ENCODE measurements at regions of chr19 and their contacts with region 1.

Region 1: DNA sequence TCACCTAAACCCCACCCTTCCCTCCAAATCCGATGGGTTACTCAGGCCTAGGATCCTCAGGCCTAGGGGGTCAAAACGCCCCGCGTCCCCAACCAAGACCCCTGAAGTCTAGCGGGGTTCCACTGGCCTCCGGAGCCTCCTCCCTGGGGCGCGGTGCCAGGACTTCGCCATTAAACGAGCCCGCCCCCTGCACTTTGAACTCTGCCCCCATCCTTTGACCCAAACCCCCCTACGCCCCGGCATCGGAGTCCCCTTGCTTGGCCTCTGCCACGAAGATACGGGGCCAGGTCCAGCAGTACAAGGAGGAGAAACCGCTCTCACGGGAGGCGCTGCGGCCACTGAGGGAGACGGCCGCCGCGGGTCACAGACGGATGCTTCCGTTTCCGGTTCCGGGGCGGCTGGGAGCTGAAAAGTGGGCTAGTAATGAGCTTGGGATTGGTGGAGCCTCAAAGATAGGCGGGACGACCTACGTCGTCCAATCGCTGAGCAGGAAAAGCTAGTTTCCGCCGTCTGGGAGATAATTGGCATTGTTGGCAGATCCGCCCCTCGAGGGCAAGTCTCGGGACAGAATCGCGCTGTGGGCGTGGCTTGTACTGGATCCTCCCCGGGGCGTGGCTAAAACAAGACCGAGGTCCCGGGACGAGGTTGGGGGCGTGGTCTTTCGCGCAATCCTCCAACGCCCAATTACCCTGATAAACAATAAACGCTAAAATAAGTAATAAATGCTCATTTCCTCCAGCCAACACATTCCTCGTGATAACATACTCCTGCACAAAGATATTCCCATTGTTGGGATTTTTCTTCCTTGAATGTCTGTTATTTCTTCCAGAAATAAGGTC is 5.7 kb upstream of the ZNF77 start:
- DNase-seq: peak; percentile 98 to 100 (median 100)
- ATAC-seq: peak; percentile 96
- H3K4me3 ChIP-seq: peak overlapping the region; percentile 93
- H3K4me3 Mint-ChIP-seq: peak overlapping the region; percentile 86 to 98 (median 96)
- H3K27ac ChIP-seq: peak overlapping the region; percentile 87
- H3K27ac Mint-ChIP-seq: peak overlapping the region; percentile 91 to 100 (median 97)
- H3K4me1 ChIP-seq: peaks cover 9 to 11% of the 10 kb centered on the region in 2 donors
- H3K4me1 Mint-ChIP-seq: peaks cover 15 to 34% (median 29%) of the 10 kb centered on the region in 7 donors
- H3K27me3 ChIP-seq: no peaks in the 10 kb centered on the region
- H3K27me3 Mint-ChIP-seq: no peaks in the 10 kb centered on the region

Region 2: GRCh38 chr19:2782936-2783780 is 167.3 kb before region 1 on chr19 and contains the start of gene SGTA:
- CTCF ChIA-PET with region 1: no interaction called
- POLR2A ChIA-PET with region 1: no interaction called
- intact Hi-C with region 1: loop called in 1 of 2 experiments (anchors 1 kb)
- DNase-seq: peak; percentile 82 to 97 (median 95)
- ATAC-seq: peak; percentile 73
- H3K4me3 ChIP-seq: peak within 1 kb of the TSS; percentile 90
- H3K4me3 Mint-ChIP-seq: peak within 1 kb of the TSS; percentile 83 to 98 (median 88)
- H3K27ac ChIP-seq: peak within 1 kb of the TSS; percentile 95
- H3K27ac Mint-ChIP-seq: peak within 1 kb of the TSS; percentile 78 to 97 (median 92)
- H3K4me1 ChIP-seq: peaks cover 33 to 35% of the 10 kb centered on the region in 2 donors
- H3K4me1 Mint-ChIP-seq: peaks cover 29 to 64% (median 51%) of the 10 kb centered on the region in 7 donors
- H3K27me3 ChIP-seq: no peaks in the 10 kb centered on the region
- H3K27me3 Mint-ChIP-seq: no peaks in the 10 kb centered on the region
- total RNA-seq, gene SGTA: 32.2 to 47.8 (median 37.9) TPM

Region 3: DNA sequence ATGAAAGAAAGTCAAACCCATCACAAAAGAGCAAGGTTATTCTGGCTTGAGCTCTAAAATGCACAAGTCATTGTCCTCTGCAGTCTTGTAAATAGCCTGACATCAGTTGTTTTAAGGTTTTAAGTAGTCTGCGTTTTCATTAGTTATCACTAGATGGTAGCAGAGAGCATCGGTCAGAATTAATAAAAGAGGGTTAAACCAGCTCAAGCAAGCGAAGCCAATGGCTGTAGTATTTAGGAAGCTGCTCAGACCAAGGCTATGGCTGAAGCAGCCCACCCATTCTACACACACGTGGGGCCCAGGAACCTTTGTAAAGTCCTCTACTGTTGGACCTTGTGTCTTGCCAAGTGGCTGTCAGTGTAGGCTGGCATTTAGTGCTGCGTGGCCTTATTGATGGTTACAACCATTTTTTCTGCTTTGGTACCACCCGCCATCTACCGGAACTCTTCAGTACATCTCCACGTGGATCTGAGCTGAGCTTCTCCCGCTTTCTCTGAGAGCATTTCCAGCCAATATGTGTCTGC is 63.1 kb before region 1 on chr19:
- CTCF ChIA-PET with region 1: interaction called, 3 read pairs
- POLR2A ChIA-PET with region 1: interaction called, 3 read pairs
- intact Hi-C with region 1: loop called in 1 of 2 experiments (anchors 1 kb)
- DNase-seq: peak in 4 of 9 donors; percentile 14 to 19 (median 17)
- ATAC-seq: peak; percentile 50
- H3K4me3 ChIP-seq: no peak overlapping the region
- H3K4me3 Mint-ChIP-seq: peak overlapping the region in 1 of 10 donors; percentile 42
- H3K27ac ChIP-seq: no peak overlapping the region
- H3K27ac Mint-ChIP-seq: peak overlapping the region in 4 of 9 donors; percentile 26 to 84 (median 76)
- H3K4me1 ChIP-seq: no peaks in the 10 kb centered on the region
- H3K4me1 Mint-ChIP-seq: peaks cover 0 to 13% (median 8%) of the 10 kb centered on the region in 7 donors
- H3K27me3 ChIP-seq: no peaks in the 10 kb centered on the region
- H3K27me3 Mint-ChIP-seq: no peaks in the 10 kb centered on the region

Region 4: GRCh38 chr19:2977001-2977685 is 26.6 kb after region 1 on chr19 and contains the start of gene TLE6:
- CTCF ChIA-PET with region 1: interaction called, 5 read pairs
- POLR2A ChIA-PET with region 1: interaction called, 3 read pairs
- intact Hi-C with region 1: loop called (anchors 1 kb)
- DNase-seq: peak; percentile 82 to 94 (median 93)
- ATAC-seq: peak; percentile 99
- H3K4me3 ChIP-seq: peak within 1 kb of the TSS; percentile 75
- H3K4me3 Mint-ChIP-seq: peak within 1 kb of the TSS; percentile 88 to 98 (median 95)
- H3K27ac ChIP-seq: peak within 1 kb of the TSS; percentile 44
- H3K27ac Mint-ChIP-seq: peak within 1 kb of the TSS; percentile 63 to 95 (median 88)
- H3K4me1 ChIP-seq: peaks cover 10 to 12% of the 10 kb centered on the region in 2 donors
- H3K4me1 Mint-ChIP-seq: peaks cover 0 to 24% (median 18%) of the 10 kb centered on the region in 7 donors
- H3K27me3 ChIP-seq: no peaks in the 10 kb centered on the region
- H3K27me3 Mint-ChIP-seq: peaks cover 3 to 22% (median 9%) of the 10 kb centered on the region in 5 donors
- total RNA-seq, gene TLE6: 0.60 to 0.64 TPM in 2 of 5 experiments, not detected in the others

Region 5: GRCh38 chr19:3020321-3020960 is 69.9 kb after region 1 on chr19:
- CTCF ChIA-PET with region 1: no interaction called
- POLR2A ChIA-PET with region 1: no interaction called
- intact Hi-C with region 1: no loop called
- DNase-seq: no peak
- ATAC-seq: no peak
- H3K4me3 ChIP-seq: no peak overlapping the region
- H3K4me3 Mint-ChIP-seq: no peak overlapping the region
- H3K27ac ChIP-seq: no peak overlapping the region
- H3K27ac Mint-ChIP-seq: no peak overlapping the region
- H3K4me1 ChIP-seq: peaks cover 4 to 6% of the 10 kb centered on the region in 2 donors
- H3K4me1 Mint-ChIP-seq: peaks cover 6 to 26% (median 18%) of the 10 kb centered on the region in 7 donors
- H3K27me3 ChIP-seq: no peaks in the 10 kb centered on the region
- H3K27me3 Mint-ChIP-seq: peaks cover 0 to 11% (median 0%) of the 10 kb centered on the region in 5 donors

Region 6: DNA sequence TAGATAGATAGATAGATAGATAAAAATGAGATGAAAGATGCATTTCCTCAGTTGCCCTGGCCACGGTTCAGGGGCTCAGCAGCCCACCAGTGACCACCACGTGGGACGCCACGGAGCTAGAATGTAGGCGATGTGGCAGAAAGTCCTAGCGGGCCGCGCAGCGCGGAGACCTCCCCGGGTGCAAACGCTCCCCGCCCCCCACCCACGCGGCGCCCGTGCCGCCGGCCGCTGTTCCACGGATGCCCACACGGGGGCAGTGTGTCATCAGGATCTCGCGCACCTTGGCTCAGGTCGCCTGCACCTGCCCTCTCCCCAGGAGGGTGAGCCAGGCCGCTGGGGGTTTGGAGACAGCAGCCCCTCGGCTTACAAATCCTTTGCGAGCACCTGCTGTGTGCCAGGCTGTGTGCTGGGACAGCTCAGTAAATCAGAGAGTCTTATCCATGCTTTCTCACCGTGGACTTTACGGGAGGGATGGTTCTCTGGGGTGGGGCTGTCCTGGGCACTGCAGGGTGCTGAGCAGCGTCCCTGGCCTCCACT is 125.5 kb after region 1 on chr19:
- CTCF ChIA-PET with region 1: interaction called, 12 read pairs
- POLR2A ChIA-PET with region 1: no interaction called
- intact Hi-C with region 1: no loop called
- DNase-seq: peak; percentile 63 to 85 (median 71)
- ATAC-seq: peak; percentile 99
- H3K4me3 ChIP-seq: no peak overlapping the region
- H3K4me3 Mint-ChIP-seq: peak overlapping the region in 4 of 10 donors; percentile 44 to 68 (median 50)
- H3K27ac ChIP-seq: no peak overlapping the region
- H3K27ac Mint-ChIP-seq: no peak overlapping the region
- H3K4me1 ChIP-seq: peaks cover 0 to 9% of the 10 kb centered on the region in 2 donors
- H3K4me1 Mint-ChIP-seq: peaks cover 0 to 10% (median 4%) of the 10 kb centered on the region in 7 donors
- H3K27me3 ChIP-seq: no peaks in the 10 kb centered on the region
- H3K27me3 Mint-ChIP-seq: peaks cover 0 to 6% (median 0%) of the 10 kb centered on the region in 5 donors

Region 7: DNA sequence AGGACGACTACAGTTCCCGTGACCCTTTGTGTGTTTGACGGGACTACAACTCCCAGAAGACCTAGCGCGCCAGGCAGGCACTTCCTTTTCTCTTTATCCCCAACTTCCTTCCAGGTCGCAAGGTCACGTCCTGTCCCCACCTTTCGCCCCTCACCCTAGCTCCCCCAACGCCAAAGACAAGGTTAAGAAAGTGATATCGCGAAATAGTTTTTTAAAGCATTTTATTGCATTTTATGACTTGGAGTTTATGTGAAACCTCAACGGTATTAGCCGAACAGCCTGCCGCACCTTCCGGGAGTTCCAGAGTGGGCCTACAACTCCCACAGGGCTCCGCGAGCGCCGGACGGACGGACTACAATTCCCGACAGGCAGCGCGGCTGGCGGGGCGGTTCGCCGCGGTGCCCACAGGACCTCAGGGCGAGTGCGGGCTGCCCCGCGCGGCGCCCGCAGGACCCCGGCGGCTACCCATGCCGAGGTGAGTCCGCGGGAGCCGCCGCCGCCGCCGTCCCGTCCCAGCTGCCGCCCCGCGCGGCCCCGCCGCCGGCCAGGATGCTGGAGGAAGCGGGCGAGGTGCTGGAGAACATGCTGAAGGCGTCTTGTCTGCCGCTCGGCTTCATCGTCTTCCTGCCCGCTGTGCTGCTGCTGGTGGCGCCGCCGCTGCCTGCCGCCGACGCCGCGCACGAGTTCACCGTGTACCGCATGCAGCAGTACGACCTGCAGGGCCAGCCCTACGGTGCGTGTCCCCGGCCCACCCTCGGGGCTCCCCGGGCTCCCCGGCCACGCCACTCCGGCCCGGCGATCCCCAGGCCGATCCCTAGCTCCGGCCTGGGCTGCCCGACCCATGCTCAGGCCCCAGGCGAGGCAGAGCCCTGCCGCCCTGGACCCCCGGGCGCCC is 235.2 kb after region 1 on chr19 and contains the start of gene NCLN:
- CTCF ChIA-PET with region 1: no interaction called
- POLR2A ChIA-PET with region 1: interaction called, 11 read pairs
- intact Hi-C with region 1: loop called (anchors 1 to 2 kb)
- DNase-seq: peak; percentile 92 to 98 (median 95)
- ATAC-seq: peak; percentile 94
- H3K4me3 ChIP-seq: peak within 1 kb of the TSS; percentile 71
- H3K4me3 Mint-ChIP-seq: peak within 1 kb of the TSS; percentile 86 to 99 (median 94)
- H3K27ac ChIP-seq: peak within 1 kb of the TSS; percentile 74
- H3K27ac Mint-ChIP-seq: peak within 1 kb of the TSS; percentile 89 to 99 (median 91)
- H3K4me1 ChIP-seq: peaks cover 53 to 63% of the 10 kb centered on the region in 2 donors
- H3K4me1 Mint-ChIP-seq: peaks cover 43 to 66% (median 54%) of the 10 kb centered on the region in 7 donors
- H3K27me3 ChIP-seq: no peaks in the 10 kb centered on the region
- H3K27me3 Mint-ChIP-seq: peaks cover 0 to 2% (median 0%) of the 10 kb centered on the region in 5 donors
- total RNA-seq, gene NCLN: 45.4 to 64.7 (median 53.7) TPM